ENCODE measurements at regions of chr22 and their contacts with region 1.

Region 1: GRCh38 chr22:18001040-18001893 is 23.1 kb downstream of the MICAL3 start:
- DNase-seq: peak; percentile 91 to 94 (median 92)
- ATAC-seq: peak; percentile 96 to 98 (median 97)
- H3K4me3 ChIP-seq: peak overlapping the region; percentile 65 to 99 (median 84)
- H3K27ac ChIP-seq: peak overlapping the region; percentile 86 to 98 (median 95)
- H3K4me1 ChIP-seq: peaks cover 0 to 37% (median 18%) of the 10 kb centered on the region in 12 donors
- H3K27me3 ChIP-seq: peaks cover 0 to 3% (median 0%) of the 10 kb centered on the region in 9 donors
- CTCF ChIP-seq: peak in 11 of 12 donors; percentile 19 to 67 (median 49)
- POLR2A ChIP-seq: peak in 1 of 2 donors; percentile 86

Region 2: DNA sequence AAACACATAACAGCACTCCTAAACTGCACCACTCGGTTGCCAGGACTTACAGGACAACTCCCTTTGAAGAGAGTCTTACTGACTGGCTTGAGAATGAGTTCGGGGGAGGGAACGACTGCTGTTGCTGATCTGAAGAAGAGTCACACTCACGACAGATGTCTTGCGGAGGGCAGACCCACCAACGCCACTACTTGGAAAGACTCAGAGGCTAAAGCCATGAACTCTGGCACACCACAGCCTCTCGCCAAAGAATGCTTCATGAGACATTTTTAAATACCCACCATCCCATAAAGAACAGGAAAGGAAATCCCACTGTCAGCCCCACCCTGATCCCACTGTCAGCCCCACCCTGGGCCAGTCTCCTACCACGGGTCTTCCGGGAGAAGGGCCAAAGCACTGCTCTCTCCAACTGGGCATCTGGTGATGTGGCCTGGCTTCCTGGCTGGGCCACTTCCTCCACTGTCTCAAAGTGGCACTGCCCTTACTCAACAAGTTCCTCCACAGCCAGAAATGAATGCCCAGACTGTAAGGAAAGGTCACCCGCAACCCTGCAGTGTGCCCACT is 50.5 kb before region 1 on chr22:
- intact Hi-C with region 1: loop called in 1 of 10 experiments (anchors 10 kb)
- DNase-seq: peak in 4 of 5 donors; percentile 61 to 85 (median 68)
- ATAC-seq: peak; percentile 72 to 78 (median 74)
- H3K4me3 ChIP-seq: no peak overlapping the region
- H3K27ac ChIP-seq: peak overlapping the region; percentile 59 to 95 (median 79)
- H3K4me1 ChIP-seq: peaks cover 2 to 90% (median 46%) of the 10 kb centered on the region in 12 donors
- H3K27me3 ChIP-seq: no peaks in the 10 kb centered on the region
- CTCF ChIP-seq: no peak
- POLR2A ChIP-seq: no peak

Region 3: GRCh38 chr22:17972385-17973181 is 28.7 kb before region 1 on chr22:
- intact Hi-C with region 1: no loop called
- DNase-seq: peak in 1 of 5 donors; percentile 42
- ATAC-seq: peak in 3 of 4 donors; percentile 28 to 33 (median 33)
- H3K4me3 ChIP-seq: no peak overlapping the region
- H3K27ac ChIP-seq: peak overlapping the region in 9 of 12 donors; percentile 23 to 66 (median 51)
- H3K4me1 ChIP-seq: peaks cover 0 to 74% (median 46%) of the 10 kb centered on the region in 12 donors
- H3K27me3 ChIP-seq: no peaks in the 10 kb centered on the region
- CTCF ChIP-seq: no peak
- POLR2A ChIP-seq: no peak

Measured in heart left ventricle (tissue), 16 donors.